Calu3 (cell line): ENCODE measurements at regions of chr10 and their contacts with region 1.

Region 1: DNA sequence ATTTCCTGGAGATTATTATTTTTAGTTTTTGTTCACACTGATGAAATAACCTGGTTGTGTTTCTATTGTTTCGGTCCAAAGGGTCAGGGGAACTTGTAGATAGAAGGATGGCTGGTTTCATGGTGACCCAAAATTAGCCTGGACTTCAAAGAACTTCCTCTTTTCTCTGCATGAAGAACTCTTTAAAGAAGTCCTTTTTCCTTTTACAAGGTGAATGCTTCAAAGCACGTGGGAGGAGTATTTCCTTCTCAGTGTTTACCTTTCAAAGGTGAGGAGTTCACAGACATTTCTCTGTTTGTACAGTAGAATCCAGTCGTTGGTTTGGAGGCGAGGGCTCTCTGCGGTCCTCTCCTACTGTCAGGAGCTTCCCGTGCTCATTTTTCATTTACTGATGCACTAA is 561.7 kb downstream of the GATA3 start:
- DNase-seq: peak; percentile 32
- H3K4me3 Mint-ChIP-seq: no peak overlapping the region
- H3K27ac Mint-ChIP-seq: peak overlapping the region; percentile 82
- H3K4me1 Mint-ChIP-seq: peaks cover 44% of the 10 kb centered on the region
- H3K27me3 Mint-ChIP-seq: no peaks in the 10 kb centered on the region
- CTCF ChIP-seq: no peak

Region 2: GRCh38 chr10:8350351-8350967 is 265.7 kb before region 1 on chr10:
- CTCF ChIA-PET with region 1: no interaction called
- intact Hi-C with region 1: no loop called
- DNase-seq: no peak
- H3K4me3 Mint-ChIP-seq: no peak overlapping the region
- H3K27ac Mint-ChIP-seq: no peak overlapping the region
- H3K4me1 Mint-ChIP-seq: peaks cover 17% of the 10 kb centered on the region
- H3K27me3 Mint-ChIP-seq: no peaks in the 10 kb centered on the region
- CTCF ChIP-seq: no peak

Region 3: GRCh38 chr10:8543361-8544069 is 72.7 kb before region 1 on chr10:
- CTCF ChIA-PET with region 1: no interaction called
- intact Hi-C with region 1: loop called (anchors 2 kb)
- DNase-seq: peak; percentile 88
- H3K4me3 Mint-ChIP-seq: peak overlapping the region; percentile 40
- H3K27ac Mint-ChIP-seq: peak overlapping the region; percentile 99
- H3K4me1 Mint-ChIP-seq: peaks cover 44% of the 10 kb centered on the region
- H3K27me3 Mint-ChIP-seq: no peaks in the 10 kb centered on the region
- CTCF ChIP-seq: no peak

Region 4: GRCh38 chr10:8705415-8705814 is 89.2 kb after region 1 on chr10:
- CTCF ChIA-PET with region 1: no interaction called
- intact Hi-C with region 1: loop called (anchors 2 kb)
- DNase-seq: no peak
- H3K4me3 Mint-ChIP-seq: no peak overlapping the region
- H3K27ac Mint-ChIP-seq: no peak overlapping the region
- H3K4me1 Mint-ChIP-seq: peaks cover 23% of the 10 kb centered on the region
- H3K27me3 Mint-ChIP-seq: no peaks in the 10 kb centered on the region
- CTCF ChIP-seq: no peak

Region 5: DNA sequence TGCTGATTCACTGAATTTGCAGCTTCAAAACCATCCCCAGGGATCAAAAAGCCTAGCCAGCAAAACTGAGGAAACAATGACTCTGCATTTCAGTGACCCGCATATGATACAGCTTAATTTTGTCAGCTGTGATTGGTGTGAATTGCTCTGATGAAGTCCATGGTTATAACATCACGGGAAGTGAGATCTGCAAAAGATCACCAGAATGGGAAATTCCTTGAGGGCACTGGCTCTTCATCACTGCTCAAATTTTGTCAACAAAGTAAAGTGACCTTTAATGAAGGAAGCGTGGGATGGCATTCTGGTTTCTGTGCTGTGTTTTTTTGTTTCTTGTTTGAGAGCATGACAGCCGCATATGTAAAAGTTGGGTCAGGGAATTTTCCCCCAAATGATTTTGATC is 184.3 kb after region 1 on chr10:
- CTCF ChIA-PET with region 1: no interaction called
- intact Hi-C with region 1: no loop called
- DNase-seq: no peak
- H3K4me3 Mint-ChIP-seq: no peak overlapping the region
- H3K27ac Mint-ChIP-seq: no peak overlapping the region
- H3K4me1 Mint-ChIP-seq: no peaks in the 10 kb centered on the region
- H3K27me3 Mint-ChIP-seq: no peaks in the 10 kb centered on the region
- CTCF ChIP-seq: no peak